RWPE1 (cell line): ENCODE measurements at regions of chr16 and their contacts with region 1.

Region 1: DNA sequence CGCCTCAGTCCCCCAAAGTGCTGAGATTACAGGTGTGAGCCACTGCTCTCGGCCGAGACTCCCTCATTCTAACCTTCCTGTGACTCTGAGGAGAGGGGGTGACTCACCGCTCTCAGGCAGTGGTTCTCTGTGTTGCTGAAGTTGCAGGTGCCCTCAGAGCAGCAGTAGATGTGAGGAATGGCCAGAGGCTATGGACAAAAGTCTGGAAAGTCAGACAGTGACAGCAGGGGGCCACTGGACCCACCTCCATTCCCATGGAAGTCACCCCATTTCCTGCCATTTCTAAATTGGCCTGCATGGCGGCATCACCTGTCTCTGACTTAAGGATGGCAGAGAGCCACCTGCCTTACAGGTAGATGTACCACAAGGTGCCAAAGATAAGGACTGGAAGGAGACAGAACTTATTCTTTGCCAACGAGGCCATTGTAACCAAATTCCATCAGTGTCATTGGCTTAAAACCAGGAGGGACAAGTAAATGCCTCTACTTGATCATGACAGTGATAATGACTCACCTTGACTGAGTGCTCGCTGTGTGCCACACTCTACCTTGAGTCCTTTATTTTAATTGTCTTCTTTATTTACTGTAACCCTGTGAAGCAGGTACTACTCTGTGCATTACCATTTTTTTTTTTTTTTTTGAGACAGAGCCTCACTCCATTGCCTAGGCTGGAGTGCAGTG is 15.3 kb upstream of the CNOT1 start:
- DNase-seq: no peak
- H3K27ac ChIP-seq: no peak overlapping the region
- CTCF ChIP-seq: no peak

Region 2: GRCh38 chr16:58629572-58630104 is 15.3 kb before region 1 on chr16 and contains the start of gene CNOT1:
- CTCF ChIA-PET with region 1: no interaction called
- POLR2A ChIA-PET with region 1: no interaction called
- DNase-seq: peak; percentile 99
- H3K27ac ChIP-seq: peak within 1 kb of the TSS; percentile 91
- CTCF ChIP-seq: no peak

Region 3: DNA sequence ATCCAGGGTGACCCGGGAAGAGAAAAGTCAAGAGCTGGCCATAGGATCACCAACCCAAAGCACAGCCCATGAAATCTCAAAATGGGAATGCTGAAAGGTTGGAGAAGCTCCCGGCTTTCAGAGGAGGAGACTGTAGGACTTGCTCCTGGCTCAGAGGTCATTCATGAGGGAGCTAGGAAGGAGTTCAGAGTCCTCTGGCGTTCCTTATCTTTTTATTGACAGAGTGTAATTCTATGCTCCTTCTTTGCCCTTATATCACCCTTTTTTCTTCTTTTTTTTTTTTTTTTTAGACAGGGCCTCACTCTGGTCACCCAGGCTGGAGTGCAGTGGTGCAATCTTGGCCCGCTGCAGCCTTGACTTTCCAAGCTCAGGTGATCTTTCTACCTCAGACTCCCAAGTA is 12.0 kb after region 1 on chr16:
- CTCF ChIA-PET with region 1: interaction called, 5 read pairs
- POLR2A ChIA-PET with region 1: interaction called, 10 read pairs
- DNase-seq: no peak
- H3K27ac ChIP-seq: no peak overlapping the region
- CTCF ChIP-seq: no peak